HCT116 (cell line): ENCODE measurements at regions of chr1 and their contacts with region 1.

Region 1: DNA sequence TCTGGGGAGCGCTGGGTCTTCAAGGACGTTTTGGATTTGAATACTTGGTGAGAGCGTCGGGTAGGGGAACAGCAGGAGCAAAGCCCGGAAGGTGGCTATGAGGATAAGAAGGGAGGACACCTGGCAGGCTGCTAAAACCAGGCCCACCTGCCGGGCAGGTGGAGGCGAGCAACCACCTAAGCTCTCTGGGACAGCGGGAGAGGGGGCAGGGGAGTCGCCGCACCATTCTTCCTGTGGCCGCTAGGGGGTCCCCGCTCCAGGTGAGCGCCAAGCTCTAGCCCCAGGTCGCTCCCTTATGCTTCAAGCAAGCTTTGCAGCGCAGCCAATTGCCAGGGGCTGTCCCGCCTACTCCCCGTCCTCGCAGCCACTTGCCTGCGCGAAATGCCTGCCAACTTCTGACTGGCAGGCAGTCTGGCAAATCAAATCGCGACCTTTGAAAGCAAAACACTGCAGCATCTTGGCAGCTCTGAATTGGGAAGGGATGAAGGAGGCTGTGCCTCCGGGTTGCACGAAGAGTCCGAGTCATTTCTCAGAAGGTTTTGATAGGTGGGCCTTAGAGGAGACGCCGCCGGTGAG is at the start of gene NIPAL3:
- DNase-seq: peak; percentile 99
- ATAC-seq: peak; percentile 90
- H3K4me3 ChIP-seq: peak within 1 kb of the TSS; percentile 87 to 88
- H3K27ac ChIP-seq: 0 out of 2 replicates have a peak within 1 kb of the TSS, but pooled peaks have one; percentile 26
- H3K4me1 ChIP-seq: peaks cover 40 to 79% of the 10 kb centered on the region in 2 experiments
- H3K27me3 ChIP-seq: no peaks in the 10 kb centered on the region
- CTCF ChIP-seq: peak; percentile 73 to 87 (median 80)
- POLR2A ChIP-seq: no peak
- RAD21 ChIP-seq: peak; percentile 79
- total RNA-seq, gene NIPAL3: 16.6 TPM

Region 2: GRCh38 chr1:24289937-24290595 is 125.4 kb before region 1 on chr1:
- CTCF ChIA-PET with region 1: no interaction called
- POLR2A ChIA-PET with region 1: no interaction called
- RAD21 ChIA-PET with region 1: no interaction called
- intact Hi-C with region 1: no loop called
- DNase-seq: no peak
- ATAC-seq: peak; percentile 78
- H3K4me3 ChIP-seq: no peak overlapping the region
- H3K27ac ChIP-seq: no peak overlapping the region
- H3K4me1 ChIP-seq: peaks cover 33 to 61% of the 10 kb centered on the region in 2 experiments
- H3K27me3 ChIP-seq: peaks cover 7% of the 10 kb centered on the region; the same call in 1 of the 2 replicates
- CTCF ChIP-seq: no peak
- POLR2A ChIP-seq: no peak
- RAD21 ChIP-seq: no peak

Region 3: DNA sequence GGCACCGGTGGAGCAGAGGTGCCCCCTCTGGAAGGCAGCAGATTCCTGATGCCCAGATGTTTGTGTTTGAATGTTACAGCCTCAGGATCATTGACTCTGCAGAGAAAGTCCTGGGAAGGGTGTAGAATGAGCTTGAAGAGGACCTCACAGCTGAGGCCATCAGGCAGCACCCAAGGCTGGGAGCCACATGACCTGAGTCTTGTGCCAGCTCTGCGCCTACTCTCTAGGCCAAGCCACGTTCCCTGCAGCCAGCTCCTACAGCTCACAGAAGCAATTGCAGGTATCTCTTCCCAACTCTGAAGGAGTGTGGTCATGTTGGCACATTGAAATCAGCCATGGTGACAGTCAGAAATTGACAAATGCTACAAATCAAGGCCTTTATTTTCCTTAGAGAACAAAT is 60.0 kb before region 1 on chr1:
- CTCF ChIA-PET with region 1: no interaction called
- POLR2A ChIA-PET with region 1: no interaction called
- RAD21 ChIA-PET with region 1: no interaction called
- intact Hi-C with region 1: no loop called
- DNase-seq: no peak
- ATAC-seq: 0 out of 2 replicates have a peak, but pooled peaks have one; percentile 28
- H3K4me3 ChIP-seq: no peak overlapping the region
- H3K27ac ChIP-seq: no peak overlapping the region
- H3K4me1 ChIP-seq: peaks cover 3 to 11% of the 10 kb centered on the region in 2 experiments; a peak in 3 of 4 replicates
- H3K27me3 ChIP-seq: no peaks in the 10 kb centered on the region
- CTCF ChIP-seq: no peak
- POLR2A ChIP-seq: no peak
- RAD21 ChIP-seq: no peak

Region 4: DNA sequence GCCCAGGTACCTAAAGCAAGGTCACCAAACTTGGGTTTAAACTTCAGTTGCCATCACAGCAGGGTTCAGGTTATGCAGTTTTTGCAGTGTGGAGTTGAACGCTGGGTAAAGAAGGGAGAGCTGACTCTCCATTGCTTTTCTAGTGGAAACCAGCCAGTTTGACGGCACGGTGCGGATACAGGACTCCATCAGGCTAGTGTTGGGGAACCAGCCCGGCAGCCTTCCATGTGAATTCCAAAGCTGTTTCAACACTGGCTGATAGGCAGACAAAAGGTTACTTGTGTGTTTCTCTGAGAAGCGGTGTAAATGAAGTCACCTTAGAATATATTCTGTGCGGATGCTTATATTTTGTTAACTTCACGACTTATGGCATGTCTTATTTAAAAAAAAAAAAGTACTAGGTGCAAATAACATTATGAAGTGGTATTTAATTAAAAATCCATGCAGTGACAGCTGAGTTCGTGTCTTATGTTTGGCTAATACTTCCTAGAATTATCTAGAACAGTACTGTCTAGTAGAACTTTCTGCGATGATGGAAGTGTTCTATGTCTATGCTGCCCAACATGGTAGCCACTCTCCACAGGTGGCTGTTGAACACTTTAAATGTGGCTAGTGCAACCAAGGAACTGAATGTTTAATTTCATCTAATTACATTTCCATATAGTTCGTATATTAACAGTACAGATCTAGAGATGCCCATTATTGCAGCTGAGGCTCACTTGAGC is 57.3 kb after region 1 on chr1:
- CTCF ChIA-PET with region 1: no interaction called
- POLR2A ChIA-PET with region 1: no interaction called
- RAD21 ChIA-PET with region 1: no interaction called
- intact Hi-C with region 1: no loop called
- DNase-seq: no peak
- ATAC-seq: no peak
- H3K4me3 ChIP-seq: no peak overlapping the region
- H3K27ac ChIP-seq: no peak overlapping the region
- H3K4me1 ChIP-seq: no peaks in the 10 kb centered on the region
- H3K27me3 ChIP-seq: no peaks in the 10 kb centered on the region
- CTCF ChIP-seq: no peak
- POLR2A ChIP-seq: no peak
- RAD21 ChIP-seq: no peak

Region 5: GRCh38 chr1:24526940-24527542 is 111.6 kb after region 1 on chr1:
- CTCF ChIA-PET with region 1: interaction called, 10 read pairs
- POLR2A ChIA-PET with region 1: no interaction called
- RAD21 ChIA-PET with region 1: no interaction called
- intact Hi-C with region 1: loop called (anchors 10 kb)
- DNase-seq: peak; percentile 16
- ATAC-seq: peak; percentile 82
- H3K4me3 ChIP-seq: no peak overlapping the region
- H3K27ac ChIP-seq: no peak overlapping the region
- H3K4me1 ChIP-seq: no peaks in the 10 kb centered on the region
- H3K27me3 ChIP-seq: no peaks in the 10 kb centered on the region
- CTCF ChIP-seq: peak; percentile 52 to 72 (median 67); a peak in 5 of 6 replicates
- POLR2A ChIP-seq: no peak
- RAD21 ChIP-seq: peak; percentile 60

Region 6: DNA sequence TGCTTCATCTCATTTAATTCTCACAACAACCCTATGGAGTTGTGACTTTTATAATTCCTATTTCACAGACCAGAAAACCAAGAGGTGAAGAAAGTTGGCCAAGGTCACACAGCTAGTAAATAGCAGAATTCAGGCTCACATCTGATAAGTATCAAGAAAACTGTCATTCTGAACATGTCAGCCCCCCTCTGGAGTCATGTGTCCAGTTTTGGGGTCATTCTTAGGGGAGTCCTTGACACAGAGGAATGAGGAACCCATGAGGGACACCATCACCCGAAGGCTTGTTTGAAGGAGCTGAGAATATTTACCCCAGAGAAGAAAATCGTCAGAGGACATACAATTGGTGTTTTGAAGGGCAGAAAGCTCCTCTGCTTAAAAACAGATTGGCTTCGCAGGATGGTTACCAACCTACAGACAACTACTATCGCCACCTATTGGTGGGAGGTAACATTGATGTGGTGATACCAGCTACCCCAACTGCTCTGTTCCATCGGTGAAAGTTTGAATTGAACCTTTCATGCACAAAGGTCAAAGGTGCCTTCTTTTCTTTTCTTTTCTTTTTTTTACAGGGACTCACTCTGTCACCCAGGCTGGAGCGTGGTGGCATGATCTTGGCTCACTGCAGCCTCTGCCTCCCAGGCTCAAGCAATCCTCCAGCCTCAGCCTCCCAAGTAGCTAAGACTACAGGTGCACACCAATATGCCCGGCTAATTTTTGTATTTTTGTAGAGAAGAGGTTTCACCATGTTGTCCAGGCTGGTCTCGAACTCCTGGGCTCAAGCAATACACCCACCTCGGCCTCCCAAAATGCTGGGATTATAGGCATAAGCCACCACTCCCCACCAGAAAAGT is 171.8 kb after region 1 on chr1:
- CTCF ChIA-PET with region 1: interaction called, 17 read pairs
- POLR2A ChIA-PET with region 1: no interaction called
- RAD21 ChIA-PET with region 1: no interaction called
- intact Hi-C with region 1: no loop called
- DNase-seq: peak; percentile 37
- ATAC-seq: peak; percentile 96
- H3K4me3 ChIP-seq: no peak overlapping the region
- H3K27ac ChIP-seq: no peak overlapping the region
- H3K4me1 ChIP-seq: peaks cover 3 to 4% of the 10 kb centered on the region in 2 experiments; a peak in 2 of 4 replicates
- H3K27me3 ChIP-seq: peaks cover 8% of the 10 kb centered on the region; the same call in 1 of the 2 replicates
- CTCF ChIP-seq: peak; percentile 59 to 82 (median 80); a peak in 5 of 6 replicates
- POLR2A ChIP-seq: no peak
- RAD21 ChIP-seq: peak; percentile 71

Region 7: DNA sequence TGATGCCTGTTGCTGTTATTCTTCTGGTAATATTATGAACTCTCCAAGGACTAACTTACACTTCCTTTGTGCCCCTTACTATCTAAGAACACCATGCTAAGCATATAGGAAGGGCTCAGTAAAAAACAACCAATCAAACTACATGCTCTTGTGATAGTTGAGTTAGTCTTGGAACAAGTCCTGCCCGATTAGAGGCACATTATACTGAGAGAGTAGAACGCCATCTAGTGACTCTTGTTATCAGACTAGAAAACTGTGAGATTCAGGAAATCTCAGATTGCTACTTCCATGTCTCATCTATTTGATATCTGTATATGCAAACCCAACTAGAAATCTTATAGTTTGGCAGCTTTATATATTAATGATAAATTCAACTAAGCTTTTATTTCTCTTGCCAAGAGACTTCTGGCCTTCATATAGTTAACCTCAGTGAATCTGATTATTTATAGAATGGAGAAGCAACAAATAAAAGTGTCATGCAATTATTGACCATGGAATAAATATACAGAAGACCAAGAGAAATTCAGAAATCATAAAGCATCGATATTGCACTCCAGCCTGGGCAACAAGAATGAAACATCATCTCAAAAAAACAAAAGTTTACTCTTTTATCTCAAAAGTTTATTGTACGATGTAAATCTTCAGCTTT is 219.9 kb after region 1 on chr1:
- CTCF ChIA-PET with region 1: interaction called, 3 read pairs
- POLR2A ChIA-PET with region 1: no interaction called
- RAD21 ChIA-PET with region 1: no interaction called
- intact Hi-C with region 1: loop called (anchors 2 kb)
- DNase-seq: peak; percentile 65
- ATAC-seq: peak; percentile 97
- H3K4me3 ChIP-seq: no peak overlapping the region
- H3K27ac ChIP-seq: no peak overlapping the region
- H3K4me1 ChIP-seq: peaks cover 5 to 8% of the 10 kb centered on the region in 2 experiments; a peak in 2 of 4 replicates
- H3K27me3 ChIP-seq: no peaks in the 10 kb centered on the region
- CTCF ChIP-seq: peak; percentile 67 to 84 (median 70)
- POLR2A ChIP-seq: no peak
- RAD21 ChIP-seq: peak; percentile 90